ENCODE measurements at regions of chr6 and their contacts with region 1.

Region 1: DNA sequence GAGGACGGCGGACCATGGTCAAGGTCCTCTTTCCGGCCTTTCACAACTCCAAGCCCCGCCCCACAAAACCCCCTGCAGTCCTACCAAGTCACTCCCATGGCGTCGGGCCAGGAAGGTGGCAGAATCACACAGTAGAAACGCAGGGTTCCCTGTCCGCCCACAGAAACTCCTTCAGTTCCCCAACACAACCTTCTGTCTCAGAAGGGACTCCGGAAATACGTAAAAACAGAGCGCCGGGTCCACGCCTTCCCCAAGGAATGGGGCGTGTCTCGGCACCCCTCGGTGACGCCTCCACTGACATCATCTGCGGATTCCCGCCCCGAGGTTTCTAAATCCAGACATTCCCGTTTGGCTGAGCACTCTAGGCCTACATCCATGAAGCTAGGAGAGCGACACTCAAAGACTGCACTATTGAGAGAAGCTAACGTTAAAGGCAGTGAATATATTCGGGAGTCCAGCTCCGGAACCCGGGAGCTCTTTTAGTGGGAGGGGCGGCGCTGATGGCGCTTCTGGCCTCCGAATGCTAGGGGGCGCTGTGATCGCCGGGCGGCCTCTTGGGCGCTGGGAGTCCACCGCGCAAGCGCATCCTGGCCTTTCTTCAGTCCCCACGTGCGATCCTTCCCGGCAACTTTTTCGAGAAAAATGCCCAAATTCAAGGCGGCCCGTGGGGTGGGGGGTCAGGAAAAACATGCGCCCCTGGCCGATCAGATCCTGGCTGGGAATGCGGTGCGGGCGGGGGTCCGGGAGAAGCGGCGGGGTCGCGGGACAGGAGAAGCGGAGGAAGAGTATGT is at the starts of genes BYSL and MED20:
- DNase-seq: peak; percentile 79
- H3K4me3 ChIP-seq: peak within 1 kb of the TSS; percentile 74
- H3K27ac ChIP-seq: peak within 1 kb of the TSS; percentile 95
- H3K27me3 ChIP-seq: no peaks in the 10 kb centered on the region
- CTCF ChIP-seq: peak; percentile 95
- polyA plus RNA-seq, gene BYSL: 18.1 and 25.1 TPM in 2 replicates
- polyA plus RNA-seq, gene MED20: 45.0 and 48.6 TPM in 2 replicates

Region 2: GRCh38 chr6:41787219-41787917 is 133.7 kb before region 1 on chr6 and contains the start of gene TOMM6:
- CTCF ChIA-PET with region 1: interaction called, 67 read pairs
- POLR2A ChIA-PET with region 1: interaction called, 17 read pairs
- DNase-seq: peak; percentile 85
- H3K4me3 ChIP-seq: peak within 1 kb of the TSS; percentile 100
- H3K27ac ChIP-seq: peak within 1 kb of the TSS; percentile 84
- H3K27me3 ChIP-seq: no peaks in the 10 kb centered on the region
- CTCF ChIP-seq: peak; percentile 75
- polyA plus RNA-seq, gene TOMM6: 165 and 192 TPM in 2 replicates

Region 3: DNA sequence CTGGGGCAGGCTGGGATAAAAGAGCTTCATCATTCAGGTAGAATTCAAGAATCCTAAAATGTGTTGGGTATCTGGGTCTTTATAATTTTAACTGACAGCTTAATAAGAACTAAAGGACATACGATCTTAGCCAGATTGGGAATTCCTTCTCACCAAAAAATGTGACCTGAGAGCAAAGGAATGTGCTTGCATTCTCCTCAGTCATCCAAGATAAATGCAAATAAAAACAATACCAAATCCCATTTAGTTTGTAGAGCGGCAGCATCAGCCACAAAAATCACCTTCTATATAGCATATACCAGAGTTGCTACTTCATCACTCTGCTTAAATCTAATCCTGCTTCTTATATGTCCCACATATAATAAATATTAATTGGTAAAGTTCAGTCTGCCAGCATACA is 42.9 kb before region 1 on chr6:
- CTCF ChIA-PET with region 1: interaction called, 17 read pairs
- POLR2A ChIA-PET with region 1: no interaction called
- DNase-seq: peak; percentile 41
- H3K4me3 ChIP-seq: no peak overlapping the region
- H3K27ac ChIP-seq: peak overlapping the region; percentile 60
- H3K27me3 ChIP-seq: no peaks in the 10 kb centered on the region
- CTCF ChIP-seq: no peak

Region 4: GRCh38 chr6:41909727-41910126 is 11.4 kb before region 1 on chr6:
- CTCF ChIA-PET with region 1: interaction called, 23 read pairs
- POLR2A ChIA-PET with region 1: no interaction called
- DNase-seq: no peak
- H3K4me3 ChIP-seq: no peak overlapping the region
- H3K27ac ChIP-seq: no peak overlapping the region
- H3K27me3 ChIP-seq: no peaks in the 10 kb centered on the region
- CTCF ChIP-seq: no peak

Region 5: DNA sequence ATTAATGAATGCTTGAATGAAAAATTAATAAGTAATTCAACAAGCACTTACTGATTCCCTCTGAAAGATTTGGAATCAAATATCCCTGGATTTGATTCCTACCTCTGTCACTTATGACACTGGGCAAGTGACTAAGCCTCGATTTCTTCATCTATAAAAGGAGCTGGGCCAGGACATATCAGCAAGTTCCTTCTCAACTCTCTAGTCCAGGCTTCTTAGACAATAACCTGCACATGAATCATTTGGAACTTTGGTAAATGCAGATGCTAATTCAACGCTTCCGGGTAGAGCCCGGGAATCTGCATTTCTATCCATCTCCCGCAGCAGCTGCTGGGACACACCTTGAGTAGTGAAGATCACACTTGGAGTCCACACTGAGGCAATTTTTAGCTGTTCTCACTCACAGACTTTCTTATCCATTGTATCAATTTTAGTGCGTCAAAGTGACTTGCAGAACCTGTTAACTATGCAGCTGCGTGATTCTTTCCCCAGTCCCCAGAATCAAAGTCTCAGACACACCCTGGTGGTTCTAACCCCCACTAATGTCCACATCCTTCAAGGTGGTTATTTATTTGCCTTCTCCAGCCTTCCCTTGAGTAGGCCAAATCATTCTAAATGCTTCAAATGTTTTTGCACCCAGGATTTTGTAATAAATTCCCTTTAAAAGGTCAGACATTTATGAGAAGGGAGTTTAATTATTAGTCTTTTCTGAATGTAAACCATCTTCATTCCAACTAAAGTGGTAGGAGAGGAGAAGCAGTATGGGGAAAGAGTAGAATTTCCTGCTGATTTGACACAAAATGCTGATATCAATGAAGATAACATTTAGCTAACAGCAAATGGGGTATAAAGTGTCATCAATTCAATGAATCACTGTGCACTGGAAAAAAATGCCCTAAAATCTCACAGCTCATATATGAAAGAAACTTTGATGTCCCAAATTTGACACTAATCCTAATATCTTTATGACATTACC is 46.5 kb after region 1 on chr6:
- CTCF ChIA-PET with region 1: interaction called, 10 read pairs
- POLR2A ChIA-PET with region 1: no interaction called
- DNase-seq: no peak
- H3K4me3 ChIP-seq: no peak overlapping the region
- H3K27ac ChIP-seq: peak overlapping the region; percentile 54
- H3K27me3 ChIP-seq: no peaks in the 10 kb centered on the region
- CTCF ChIP-seq: no peak

Region 6: DNA sequence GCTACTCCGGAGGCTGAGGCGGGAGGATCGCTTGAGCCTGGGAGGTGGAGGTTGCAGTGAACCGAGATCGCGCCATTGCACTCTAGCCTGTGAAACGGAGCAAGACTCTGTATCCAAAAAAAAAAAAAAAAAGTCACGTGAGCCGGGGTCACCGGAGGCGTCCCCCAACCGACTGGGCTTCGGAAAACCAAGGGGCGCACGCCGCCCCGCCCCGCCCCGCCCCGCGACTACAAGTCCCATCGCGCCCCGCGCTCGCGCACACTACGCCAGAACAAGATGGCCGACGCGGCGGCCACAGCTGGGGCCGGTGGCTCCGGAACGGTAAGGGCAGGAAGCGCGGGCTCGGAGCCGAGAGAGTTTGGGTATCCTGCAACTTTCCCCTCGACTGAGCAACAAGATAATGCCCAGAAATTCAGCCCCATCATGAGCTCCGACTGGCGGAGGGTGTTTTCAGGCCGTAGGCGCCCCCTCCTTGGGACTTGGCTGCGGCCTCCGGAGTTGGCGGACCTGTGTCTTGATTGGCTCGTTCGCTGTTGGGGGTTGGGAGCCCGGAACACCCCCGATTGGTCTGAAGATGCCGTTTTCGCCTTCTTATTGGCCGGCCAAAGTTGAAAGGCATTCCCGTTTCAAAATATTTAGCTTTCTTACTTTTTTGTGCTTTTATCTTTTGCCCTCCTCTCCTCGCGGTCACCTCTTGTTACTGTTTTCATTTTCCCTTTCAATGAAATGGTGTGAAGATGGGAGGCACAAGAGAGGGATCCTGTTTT is 129.3 kb after region 1 on chr6 and contains the start of gene TAF8:
- CTCF ChIA-PET with region 1: interaction called, 42 read pairs
- POLR2A ChIA-PET with region 1: interaction called, 3 read pairs
- DNase-seq: peak; percentile 82
- H3K4me3 ChIP-seq: peak within 1 kb of the TSS; percentile 90
- H3K27ac ChIP-seq: peak within 1 kb of the TSS; percentile 93
- H3K27me3 ChIP-seq: no peaks in the 10 kb centered on the region
- CTCF ChIP-seq: no peak
- polyA plus RNA-seq, gene TAF8: 14.6 and 15.0 TPM in 2 replicates

Measured in AG04450 (cell line).